ENCODE measurements at regions of chr3 and their contacts with region 1.

Region 1: DNA sequence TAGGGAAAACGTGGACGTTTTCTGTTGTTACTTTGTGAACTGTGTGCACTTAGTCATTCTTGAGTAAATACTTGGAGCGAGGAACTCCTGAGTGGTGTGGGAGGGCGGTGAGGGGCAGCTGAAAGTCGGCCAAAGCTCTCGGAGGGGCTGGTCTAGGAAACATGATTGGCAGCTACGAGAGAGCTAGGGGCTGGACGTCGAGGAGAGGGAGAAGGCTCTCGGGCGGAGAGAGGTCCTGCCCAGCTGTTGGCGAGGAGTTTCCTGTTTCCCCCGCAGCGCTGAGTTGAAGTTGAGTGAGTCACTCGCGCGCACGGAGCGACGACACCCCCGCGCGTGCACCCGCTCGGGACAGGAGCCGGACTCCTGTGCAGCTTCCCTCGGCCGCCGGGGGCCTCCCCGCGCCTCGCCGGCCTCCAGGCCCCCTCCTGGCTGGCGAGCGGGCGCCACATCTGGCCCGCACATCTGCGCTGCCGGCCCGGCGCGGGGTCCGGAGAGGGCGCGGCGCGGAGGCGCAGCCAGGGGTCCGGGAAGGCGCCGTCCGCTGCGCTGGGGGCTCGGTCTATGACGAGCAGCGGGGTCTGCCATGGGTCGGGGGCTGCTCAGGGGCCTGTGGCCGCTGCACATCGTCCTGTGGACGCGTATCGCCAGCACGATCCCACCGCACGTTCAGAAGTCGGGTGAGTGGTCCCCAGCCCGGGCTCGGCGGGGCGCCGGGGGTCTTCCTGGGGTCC is at the start of gene TGFBR2:
- DNase-seq: peak; percentile 94 to 96
- ATAC-seq: peak; percentile 95 to 98 (median 96)
- H3K4me3 ChIP-seq: peak within 1 kb of the TSS; percentile 66 to 98 (median 92)
- H3K27ac ChIP-seq: peak within 1 kb of the TSS; percentile 96 to 100 (median 99)
- H3K4me1 ChIP-seq: peaks cover 2 to 76% (median 45%) of the 10 kb centered on the region in 9 donors
- H3K27me3 ChIP-seq: no peaks in the 10 kb centered on the region
- CTCF ChIP-seq: peak in 6 of 9 donors; percentile 13 to 41 (median 32)
- total RNA-seq, gene TGFBR2: 71.1 to 197 (median 92.1) TPM

Region 2: DNA sequence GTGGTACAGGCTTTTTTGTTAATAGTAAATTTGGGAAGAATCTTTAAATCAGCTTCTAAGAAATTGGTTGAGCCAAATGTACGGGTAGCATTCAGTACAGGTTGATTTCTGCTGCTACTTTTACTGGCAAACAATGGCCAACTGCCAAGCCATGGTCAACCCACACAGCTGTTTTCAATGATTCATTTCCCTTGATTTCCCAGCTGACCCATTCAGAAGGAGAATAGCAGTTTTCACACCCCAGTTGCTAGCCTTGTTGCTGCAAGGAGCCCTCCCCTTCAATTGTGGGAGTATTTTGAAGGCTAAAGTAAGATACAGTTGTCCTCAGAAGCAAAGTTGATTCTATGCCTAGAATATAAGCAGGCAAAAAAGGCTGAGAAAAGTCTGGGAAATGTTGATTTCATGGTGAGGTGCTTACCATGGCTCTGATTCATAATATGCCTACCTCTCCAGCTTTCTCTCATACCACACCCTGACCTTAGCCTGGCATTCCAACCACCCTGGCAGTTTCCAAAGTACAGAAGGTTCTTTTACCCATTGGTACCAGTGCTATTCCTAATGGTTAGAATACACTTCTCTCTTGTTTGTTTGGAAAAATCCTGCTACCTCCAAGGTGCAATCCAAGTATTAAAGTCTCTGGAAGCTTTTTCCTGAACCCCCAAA is 320.3 kb before region 1 on chr3:
- intact Hi-C with region 1: loop called in 2 of 10 experiments (anchors 10 kb)
- DNase-seq: peak; percentile 54 to 86
- ATAC-seq: peak; percentile 87 to 96 (median 93)
- H3K4me3 ChIP-seq: no peak overlapping the region
- H3K27ac ChIP-seq: peak overlapping the region in 8 of 10 donors; percentile 21 to 76 (median 64)
- H3K4me1 ChIP-seq: peaks cover 0 to 65% (median 36%) of the 10 kb centered on the region in 9 donors
- H3K27me3 ChIP-seq: no peaks in the 10 kb centered on the region
- CTCF ChIP-seq: no peak

Region 3: DNA sequence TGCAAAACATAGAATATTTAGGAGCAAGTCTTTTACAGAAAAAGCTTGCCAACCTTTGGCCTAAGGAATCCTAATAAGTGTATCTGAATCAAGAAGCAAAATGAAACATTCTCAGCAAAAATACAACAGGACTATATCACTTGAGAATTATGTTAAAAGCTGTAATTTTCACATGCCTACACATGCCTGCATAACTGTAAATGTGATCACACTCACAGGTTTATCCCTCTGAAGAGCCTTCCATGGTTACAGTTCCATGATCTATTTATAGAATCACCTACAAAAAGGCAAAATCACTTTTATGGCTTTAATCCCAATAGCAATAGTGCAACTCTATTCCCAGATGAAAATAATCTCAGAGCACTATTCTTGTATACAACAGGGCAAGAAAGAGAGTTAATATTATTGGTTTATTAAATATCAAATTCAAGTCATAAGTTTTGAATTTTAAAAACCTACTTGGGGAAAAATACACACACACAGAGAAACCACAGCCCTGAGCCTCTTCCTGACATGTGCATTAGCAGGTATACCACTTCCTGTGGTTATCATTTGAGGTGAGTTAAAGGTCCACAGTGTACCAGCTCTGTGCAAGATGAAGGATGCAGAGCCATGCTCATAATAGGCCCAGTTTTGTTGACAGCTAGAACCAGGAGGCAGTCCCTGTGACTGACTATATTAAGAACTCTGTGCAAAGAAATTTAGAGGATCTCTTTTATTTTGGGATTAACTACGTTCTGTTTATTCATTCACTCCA is 252.6 kb before region 1 on chr3:
- intact Hi-C with region 1: loop called in 2 of 10 experiments (anchors 5 to 10 kb)
- DNase-seq: no peak
- ATAC-seq: peak; percentile 40 to 88 (median 76)
- H3K4me3 ChIP-seq: no peak overlapping the region
- H3K27ac ChIP-seq: peak overlapping the region in 9 of 10 donors; percentile 59 to 82 (median 75)
- H3K4me1 ChIP-seq: peaks cover 5 to 63% (median 55%) of the 10 kb centered on the region in 9 donors
- H3K27me3 ChIP-seq: no peaks in the 10 kb centered on the region
- CTCF ChIP-seq: no peak

Region 4: GRCh38 chr3:30453360-30454039 is 153.0 kb before region 1 on chr3:
- intact Hi-C with region 1: loop called in 1 of 10 experiments (anchors 10 kb)
- DNase-seq: peak in 1 of 2 donors; percentile 68
- ATAC-seq: peak; percentile 59 to 88 (median 80)
- H3K4me3 ChIP-seq: no peak overlapping the region
- H3K27ac ChIP-seq: peak overlapping the region in 9 of 10 donors; percentile 6 to 76 (median 51)
- H3K4me1 ChIP-seq: peaks cover 0 to 38% (median 9%) of the 10 kb centered on the region in 9 donors
- H3K27me3 ChIP-seq: no peaks in the 10 kb centered on the region
- CTCF ChIP-seq: no peak

Region 5: GRCh38 chr3:30518181-30518864 is 88.1 kb before region 1 on chr3:
- intact Hi-C with region 1: loop called in 3 of 10 experiments (anchors 5 to 10 kb)
- DNase-seq: peak in 1 of 2 donors; percentile 56
- ATAC-seq: peak; percentile 72 to 96 (median 90)
- H3K4me3 ChIP-seq: no peak overlapping the region
- H3K27ac ChIP-seq: peak overlapping the region; percentile 19 to 81 (median 68)
- H3K4me1 ChIP-seq: peaks cover 0 to 54% (median 37%) of the 10 kb centered on the region in 9 donors
- H3K27me3 ChIP-seq: no peaks in the 10 kb centered on the region
- CTCF ChIP-seq: peak in 6 of 9 donors; percentile 9 to 48 (median 21)

Region 6: GRCh38 chr3:30658328-30659052 is 52.0 kb after region 1 on chr3:
- intact Hi-C with region 1: loop called in 1 of 10 experiments (anchors 2 kb)
- DNase-seq: peak in 1 of 2 donors; percentile 50
- ATAC-seq: peak; percentile 45 to 75 (median 69)
- H3K4me3 ChIP-seq: peak overlapping the region in 1 of 10 donors; percentile 16
- H3K27ac ChIP-seq: peak overlapping the region; percentile 20 to 82 (median 69)
- H3K4me1 ChIP-seq: peaks cover 18 to 100% (median 96%) of the 10 kb centered on the region in 9 donors
- H3K27me3 ChIP-seq: no peaks in the 10 kb centered on the region
- CTCF ChIP-seq: peak in 3 of 9 donors; percentile 23 to 29 (median 24)

Measured in heart right ventricle (tissue), 16 donors.